GM12878 (cell line): ENCODE measurements at regions of chr2 and their contacts with region 1.

Region 1: DNA sequence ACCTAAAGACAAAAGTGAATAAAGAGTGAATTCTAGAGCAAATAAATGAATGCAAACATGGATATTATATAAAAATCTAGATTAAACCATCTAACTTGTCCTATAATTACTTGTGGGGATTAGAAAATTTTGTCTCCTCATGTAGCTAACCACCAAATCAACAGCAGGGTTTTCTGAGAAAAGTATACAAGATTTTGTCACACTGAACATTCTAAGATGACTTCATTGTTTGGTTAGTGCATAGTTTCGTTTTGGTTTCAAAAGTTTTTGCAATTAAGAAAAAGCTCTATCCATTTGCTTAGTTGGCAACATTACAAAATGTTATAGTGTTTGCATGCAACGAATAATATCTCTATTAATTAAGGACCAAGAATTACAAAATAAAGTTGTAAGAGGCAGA is 125.0 kb downstream of the LRP2 start:
- DNase-seq: no peak
- ATAC-seq: no peak
- H3K4me3 ChIP-seq: no peak overlapping the region
- H3K27ac ChIP-seq: no peak overlapping the region
- H3K4me1 ChIP-seq: no peaks in the 10 kb centered on the region
- H3K27me3 ChIP-seq: no peaks in the 10 kb centered on the region; a peak in 1 of 4 replicates
- CTCF ChIP-seq: no peak
- EP300 ChIP-seq: no peak
- POLR2A ChIP-seq: no peak
- RAD21 ChIP-seq: no peak

Region 2: GRCh38 chr2:169193624-169194023 is 43.7 kb before region 1 on chr2:
- CTCF ChIA-PET with region 1: no interaction called
- POLR2A ChIA-PET with region 1: no interaction called
- RAD21 ChIA-PET with region 1: no interaction called
- SMC1A ChIA-PET with region 1: no interaction called
- in situ Hi-C with region 1: no loop called
- intact Hi-C with region 1: no loop called
- DNase-seq: no peak
- ATAC-seq: no peak
- H3K4me3 ChIP-seq: no peak overlapping the region
- H3K27ac ChIP-seq: no peak overlapping the region
- H3K4me1 ChIP-seq: no peaks in the 10 kb centered on the region
- H3K27me3 ChIP-seq: no peaks in the 10 kb centered on the region
- CTCF ChIP-seq: no peak
- EP300 ChIP-seq: no peak
- POLR2A ChIP-seq: no peak
- RAD21 ChIP-seq: no peak

Region 3: DNA sequence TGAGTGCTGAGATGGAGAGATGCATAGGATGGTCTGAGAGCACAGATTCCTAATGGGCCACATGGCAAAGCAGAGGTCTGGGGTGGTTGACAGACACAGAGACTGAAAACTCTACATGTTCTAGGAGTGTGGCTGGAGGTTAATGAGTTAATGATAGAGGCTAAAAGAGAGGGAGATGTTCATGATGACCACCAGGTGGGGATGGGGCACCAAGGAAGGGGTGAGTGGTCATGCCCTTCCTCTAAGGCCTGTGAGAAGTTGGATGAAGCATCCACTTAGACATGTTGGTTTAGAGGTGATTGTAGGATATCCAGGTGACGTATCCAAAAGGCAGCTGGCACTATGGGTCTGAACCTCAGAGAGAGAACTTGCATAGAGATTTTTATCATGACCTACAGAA is 23.0 kb after region 1 on chr2:
- CTCF ChIA-PET with region 1: no interaction called
- POLR2A ChIA-PET with region 1: no interaction called
- RAD21 ChIA-PET with region 1: no interaction called
- SMC1A ChIA-PET with region 1: no interaction called
- in situ Hi-C with region 1: no loop called
- intact Hi-C with region 1: loop called (anchors 2 kb)
- DNase-seq: no peak
- ATAC-seq: no peak
- H3K4me3 ChIP-seq: no peak overlapping the region
- H3K27ac ChIP-seq: no peak overlapping the region
- H3K4me1 ChIP-seq: no peaks in the 10 kb centered on the region
- H3K27me3 ChIP-seq: no peaks in the 10 kb centered on the region
- CTCF ChIP-seq: no peak
- EP300 ChIP-seq: no peak
- POLR2A ChIP-seq: no peak
- RAD21 ChIP-seq: no peak